ENCODE measurements at regions of chr20 and their contacts with region 1.

Region 1: GRCh38 chr20:47620808-47621805 is 119.4 kb downstream of the NCOA3 start:
- DNase-seq: no peak
- H3K4me3 ChIP-seq: no peak overlapping the region
- H3K27ac ChIP-seq: peak overlapping the region; percentile 34
- H3K4me1 ChIP-seq: peaks cover 25% of the 10 kb centered on the region
- H3K27me3 ChIP-seq: no peaks in the 10 kb centered on the region
- CTCF ChIP-seq: peak; percentile 93

Region 2: DNA sequence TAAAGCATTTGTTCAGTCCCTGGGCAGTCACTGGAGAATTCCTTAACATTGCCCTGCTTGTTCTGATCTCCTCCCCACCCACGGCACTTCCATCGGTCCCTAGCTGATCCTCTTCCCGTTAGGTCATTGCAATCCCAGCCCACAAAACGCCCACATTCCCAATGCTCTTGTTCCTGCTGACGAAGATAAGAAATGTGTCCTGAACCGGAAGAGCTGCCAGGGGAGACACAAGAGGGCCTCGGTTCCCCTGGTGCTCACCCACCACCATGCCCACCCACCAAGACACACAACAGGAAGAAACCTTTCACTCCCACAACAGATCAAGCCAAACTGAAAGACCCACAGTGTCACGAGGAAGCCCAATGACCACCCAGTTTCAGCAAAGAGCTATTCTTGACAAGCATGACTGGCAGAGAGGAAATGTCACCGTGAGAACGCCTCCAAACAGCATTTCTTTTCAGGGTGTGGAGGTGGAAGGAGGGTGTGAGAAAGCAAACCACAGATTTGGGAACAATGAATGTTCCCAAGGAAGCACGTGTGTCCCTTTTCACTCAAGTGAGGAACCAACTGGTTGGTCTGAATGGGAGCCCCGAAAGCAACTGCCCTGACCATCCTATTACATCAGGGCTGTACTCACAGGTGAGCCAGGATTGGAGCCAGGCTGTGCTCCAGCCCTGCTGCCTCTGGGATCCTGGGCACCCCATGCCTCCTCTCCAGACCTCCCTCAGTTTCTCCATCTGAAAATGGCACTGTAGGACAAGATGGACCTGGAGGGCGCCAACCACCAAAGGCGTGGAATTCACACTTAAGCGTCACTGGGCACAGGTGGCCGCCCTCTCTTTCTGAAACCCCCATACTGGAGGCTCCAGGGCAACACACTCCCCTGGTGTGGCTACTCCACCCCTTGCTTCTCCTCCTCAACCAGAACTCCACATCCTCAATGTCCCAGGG is 362.1 kb before region 1 on chr20:
- intact Hi-C with region 1: no loop called
- DNase-seq: peak; percentile 53
- H3K4me3 ChIP-seq: peak overlapping the region; percentile 10
- H3K27ac ChIP-seq: peak overlapping the region; percentile 79
- H3K4me1 ChIP-seq: peaks cover 65% of the 10 kb centered on the region
- H3K27me3 ChIP-seq: no peaks in the 10 kb centered on the region
- CTCF ChIP-seq: no peak

Region 3: GRCh38 chr20:47272893-47273590 is 348.1 kb before region 1 on chr20:
- intact Hi-C with region 1: loop called (anchors 5 kb)
- DNase-seq: no peak
- H3K4me3 ChIP-seq: no peak overlapping the region
- H3K27ac ChIP-seq: peak overlapping the region; percentile 72
- H3K4me1 ChIP-seq: peaks cover 56% of the 10 kb centered on the region
- H3K27me3 ChIP-seq: no peaks in the 10 kb centered on the region
- CTCF ChIP-seq: peak; percentile 91

Region 4: DNA sequence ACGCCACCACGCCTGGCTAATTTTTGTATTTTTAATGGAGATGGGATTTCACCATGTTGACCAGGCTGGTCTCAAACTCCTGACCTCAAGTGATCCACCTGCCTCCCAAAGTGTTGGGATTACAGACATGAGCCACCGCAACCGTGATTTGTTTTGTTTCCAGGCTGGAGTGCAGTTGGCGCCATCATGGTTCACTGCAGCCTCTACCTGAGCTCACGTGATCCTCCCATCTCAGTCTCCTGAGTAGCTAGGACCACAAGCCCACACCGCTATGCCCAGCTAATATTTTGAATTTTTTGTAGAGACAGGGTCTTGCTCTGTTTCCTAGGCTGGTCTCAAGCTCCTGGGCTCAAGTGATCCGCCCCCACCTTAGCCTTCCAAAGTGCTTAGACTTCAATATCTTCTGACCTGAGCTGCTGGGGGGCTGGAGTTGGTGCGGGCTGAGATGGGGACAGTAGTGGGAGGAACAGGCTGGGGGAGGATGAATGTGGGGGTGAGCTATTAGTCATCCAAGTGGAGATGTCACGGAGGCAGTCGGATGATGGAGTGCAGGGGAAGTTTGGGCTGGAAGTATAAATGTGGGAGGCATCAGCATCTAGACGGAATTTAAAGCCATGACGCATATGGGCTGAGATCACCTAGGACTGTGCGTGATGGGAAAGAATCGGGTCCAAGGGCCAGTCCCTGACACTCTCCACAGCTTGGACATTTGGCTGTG is 241.5 kb before region 1 on chr20:
- intact Hi-C with region 1: loop called (anchors 5 kb)
- DNase-seq: no peak
- H3K4me3 ChIP-seq: no peak overlapping the region
- H3K27ac ChIP-seq: no peak overlapping the region
- H3K4me1 ChIP-seq: peaks cover 19% of the 10 kb centered on the region
- H3K27me3 ChIP-seq: no peaks in the 10 kb centered on the region
- CTCF ChIP-seq: no peak

Measured in left ventricle myocardium inferior (tissue), 1 donor.